Endothelial cell of umbilical vein (primary cell): ENCODE measurements at regions of chr12 and their contacts with region 1.

Region 1: DNA sequence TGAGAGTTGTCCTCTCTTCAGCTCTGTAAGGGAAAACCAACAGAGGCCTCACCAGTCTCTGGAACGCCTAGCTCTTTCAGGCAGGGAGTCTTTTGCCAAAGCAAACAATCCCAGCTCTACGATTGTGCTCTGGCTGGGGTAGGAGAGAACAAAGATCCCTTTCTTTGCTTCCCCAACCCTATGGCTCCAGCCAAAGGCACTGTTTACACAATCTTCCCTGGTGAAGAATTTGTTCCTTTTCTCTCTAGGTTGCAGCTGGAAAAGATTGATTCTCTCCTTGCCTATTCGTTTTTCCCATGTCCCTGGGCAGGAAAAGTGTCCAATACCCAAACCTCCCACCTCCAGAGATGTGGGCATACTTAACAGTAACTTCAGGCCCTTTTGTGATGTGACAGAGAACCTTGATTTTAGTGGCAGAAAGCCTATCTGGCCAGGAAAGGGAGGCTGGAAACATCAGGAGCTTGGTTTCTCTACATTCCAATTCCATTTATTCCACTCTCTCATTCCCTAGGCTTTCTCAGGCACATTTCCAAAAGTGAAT is 16.8 kb downstream of the ATP5MC2 start:
- DNase-seq: peak; percentile 90
- H3K4me3 ChIP-seq: no peak overlapping the region
- H3K27ac ChIP-seq: peak overlapping the region; percentile 76
- H3K4me1 ChIP-seq: peaks cover 14% of the 10 kb centered on the region
- H3K27me3 ChIP-seq: no peaks in the 10 kb centered on the region
- CTCF ChIP-seq: no peak
- POLR2A ChIP-seq: no peak

Region 2: DNA sequence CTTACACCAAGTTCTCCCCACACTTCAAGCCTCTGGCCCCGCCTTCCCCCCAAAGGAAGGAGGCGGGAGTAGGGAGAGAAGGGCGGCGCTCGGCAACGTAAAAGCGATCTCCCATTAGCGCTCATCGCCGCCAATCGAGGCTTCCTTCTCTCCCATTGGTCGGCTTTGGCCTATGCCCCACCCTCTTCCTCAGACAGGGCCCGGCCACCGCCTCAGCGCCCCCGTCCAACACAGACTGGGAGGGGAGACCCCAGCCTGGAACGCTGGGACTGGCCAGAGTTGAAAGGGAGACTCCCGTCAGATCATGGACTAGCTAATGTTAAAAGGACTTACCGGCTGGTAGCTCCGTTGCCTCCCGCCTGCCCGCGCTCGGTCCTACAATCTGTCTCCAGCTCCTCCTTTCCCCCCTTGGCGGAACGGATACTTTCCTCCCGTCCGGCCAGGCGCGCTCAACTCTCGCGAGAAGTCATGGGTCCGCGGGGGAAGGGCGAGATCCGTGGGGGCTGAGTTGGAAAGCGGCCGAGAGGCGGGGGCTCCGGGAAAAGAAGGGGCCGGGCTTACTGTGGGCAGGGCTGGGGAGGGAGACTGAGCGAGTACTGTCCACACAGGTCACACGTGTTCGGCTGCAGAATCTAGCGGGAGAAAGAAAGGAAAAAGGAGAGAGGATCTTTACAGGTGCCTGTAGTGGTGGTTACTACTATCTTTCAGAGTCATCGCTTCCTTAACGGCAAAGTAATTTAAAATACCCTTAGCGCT is 33.0 kb before region 1 on chr12 and contains the start of gene ATF7:
- CTCF ChIA-PET with region 1: no interaction called
- POLR2A ChIA-PET with region 1: no interaction called
- dilution Hi-C with region 1: no loop called
- intact Hi-C with region 1: loop called (anchors 2 kb)
- DNase-seq: peak; percentile 99
- H3K4me3 ChIP-seq: peak within 1 kb of the TSS; percentile 61 to 97 (median 87)
- H3K27ac ChIP-seq: peak within 1 kb of the TSS; percentile 86
- H3K4me1 ChIP-seq: peaks cover 29% of the 10 kb centered on the region
- H3K27me3 ChIP-seq: no peaks in the 10 kb centered on the region
- CTCF ChIP-seq: no peak
- POLR2A ChIP-seq: no peak
- total RNA-seq, gene ATF7: 56.9 and 68.5 TPM in 2 replicates